ENCODE measurements at regions of chr5 and their contacts with region 1.

Region 1: GRCh38 chr5:181173420-181174342 is 26.3 kb downstream of the OR2V2 start:
- DNase-seq: no peak
- H3K4me3 ChIP-seq: peak overlapping the region; percentile 22; the same call in 1 of the 2 replicates
- H3K27ac ChIP-seq: no peak overlapping the region
- H3K27me3 ChIP-seq: peaks cover 1% of the 10 kb centered on the region
- CTCF ChIP-seq: no peak

Region 2: GRCh38 chr5:181184857-181185251 is 11.2 kb after region 1 on chr5:
- CTCF ChIA-PET with region 1: interaction called, 17 read pairs
- POLR2A ChIA-PET with region 1: interaction called, 7 read pairs
- DNase-seq: no peak
- H3K4me3 ChIP-seq: no peak overlapping the region
- H3K27ac ChIP-seq: no peak overlapping the region
- H3K27me3 ChIP-seq: no peaks in the 10 kb centered on the region
- CTCF ChIP-seq: no peak

Region 3: DNA sequence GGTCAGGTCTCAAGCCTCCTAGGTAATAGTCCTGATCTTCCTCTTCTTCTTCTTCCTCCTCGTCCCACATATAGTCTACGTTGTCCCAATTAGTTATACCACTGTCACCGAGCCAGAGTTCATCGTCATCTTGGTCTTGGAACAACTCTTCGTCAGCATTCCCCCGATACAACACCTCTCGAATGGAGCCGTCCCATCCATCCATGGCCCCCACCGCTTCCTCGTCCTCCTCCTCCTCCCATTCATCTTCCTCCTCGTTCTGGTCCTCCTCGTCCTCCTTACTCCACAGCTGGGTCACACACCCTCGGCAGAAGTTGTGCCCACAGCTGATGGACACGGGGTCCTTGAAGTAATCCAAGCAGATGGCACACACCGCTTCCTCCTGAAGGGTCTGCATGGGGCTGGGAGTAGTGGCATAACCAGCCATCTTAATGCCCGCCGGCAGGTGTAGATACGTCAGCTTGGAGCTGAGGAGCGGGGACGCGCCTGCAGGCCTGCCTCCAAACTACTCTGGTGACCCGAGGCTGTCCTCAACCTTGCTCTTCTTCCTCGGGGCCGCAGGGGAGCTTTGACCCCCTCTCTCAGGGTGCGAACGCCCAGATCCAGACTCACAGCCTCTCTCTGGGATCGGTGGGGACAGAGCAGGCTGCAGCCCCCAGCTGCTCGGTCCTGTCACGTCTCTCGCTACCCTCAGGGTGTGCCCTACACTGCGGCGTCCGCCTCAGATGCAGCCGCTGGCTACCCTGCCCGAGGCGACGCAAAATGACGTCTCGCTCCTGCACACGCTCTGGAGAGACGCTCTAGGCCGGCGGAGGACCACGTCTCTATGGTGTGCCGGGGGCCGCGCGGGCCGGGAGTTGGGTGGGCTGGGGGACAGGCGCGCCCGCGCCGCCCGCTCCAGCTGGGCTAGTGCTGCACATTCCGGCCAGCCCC is 87.0 kb after region 1 on chr5 and contains the start of gene TRIM52:
- CTCF ChIA-PET with region 1: no interaction called
- POLR2A ChIA-PET with region 1: interaction called, 14 read pairs
- DNase-seq: no peak
- H3K4me3 ChIP-seq: peak within 1 kb of the TSS; percentile 92
- H3K27ac ChIP-seq: peak within 1 kb of the TSS; percentile 95
- H3K27me3 ChIP-seq: no peaks in the 10 kb centered on the region
- CTCF ChIP-seq: no peak
- polyA plus RNA-seq, gene TRIM52: 6.2 and 8.7 TPM in 2 replicates